Sigmoid colon (tissue), 7 donors: ENCODE measurements at regions of chr15 and their contacts with region 1.

Region 1: GRCh38 chr15:58933281-58934113 is at the start of gene SLTM:
- DNase-seq: peak; percentile 97
- H3K4me3 ChIP-seq: peak within 1 kb of the TSS; percentile 75 to 89 (median 82)
- H3K27ac ChIP-seq: peak within 1 kb of the TSS; percentile 96 to 100 (median 98)
- H3K4me1 ChIP-seq: peaks cover 4 to 33% (median 24%) of the 10 kb centered on the region in 4 donors
- H3K27me3 ChIP-seq: no peaks in the 10 kb centered on the region
- CTCF ChIP-seq: peak; percentile 22 to 47 (median 36)
- EP300 ChIP-seq: no peak
- POLR2A ChIP-seq: peak; percentile 83 to 88
- total RNA-seq, gene SLTM: 83.5 to 107 (median 95.7) TPM

Region 2: GRCh38 chr15:57706405-57707209 is 1226.9 kb before region 1 on chr15 and contains the start of gene POLR2M:
- intact Hi-C with region 1: loop called (anchors 2 kb)
- DNase-seq: peak; percentile 99
- H3K4me3 ChIP-seq: peak within 1 kb of the TSS; percentile 82 to 96 (median 86)
- H3K27ac ChIP-seq: peak within 1 kb of the TSS; percentile 94 to 97 (median 96)
- H3K4me1 ChIP-seq: peaks cover 0 to 35% (median 28%) of the 10 kb centered on the region in 4 donors
- H3K27me3 ChIP-seq: no peaks in the 10 kb centered on the region
- CTCF ChIP-seq: no peak
- EP300 ChIP-seq: peak; percentile 61 to 92 (median 71)
- POLR2A ChIP-seq: peak; percentile 61 to 68
- total RNA-seq, gene POLR2M: 80.6 to 264 (median 194) TPM

Region 3: GRCh38 chr15:58749532-58750337 is 183.8 kb before region 1 on chr15 and contains the start of gene ADAM10:
- intact Hi-C with region 1: loop called (anchors 5 kb)
- DNase-seq: peak; percentile 100
- H3K4me3 ChIP-seq: peak within 1 kb of the TSS; percentile 93 to 99 (median 96)
- H3K27ac ChIP-seq: peak within 1 kb of the TSS; percentile 98 to 99 (median 98)
- H3K4me1 ChIP-seq: peaks cover 0 to 27% (median 26%) of the 10 kb centered on the region in 4 donors
- H3K27me3 ChIP-seq: no peaks in the 10 kb centered on the region
- CTCF ChIP-seq: no peak
- EP300 ChIP-seq: peak in 2 of 4 donors; percentile 9 to 15
- POLR2A ChIP-seq: peak; percentile 85
- total RNA-seq, gene ADAM10: 44.9 to 70.9 (median 57.5) TPM

Region 4: DNA sequence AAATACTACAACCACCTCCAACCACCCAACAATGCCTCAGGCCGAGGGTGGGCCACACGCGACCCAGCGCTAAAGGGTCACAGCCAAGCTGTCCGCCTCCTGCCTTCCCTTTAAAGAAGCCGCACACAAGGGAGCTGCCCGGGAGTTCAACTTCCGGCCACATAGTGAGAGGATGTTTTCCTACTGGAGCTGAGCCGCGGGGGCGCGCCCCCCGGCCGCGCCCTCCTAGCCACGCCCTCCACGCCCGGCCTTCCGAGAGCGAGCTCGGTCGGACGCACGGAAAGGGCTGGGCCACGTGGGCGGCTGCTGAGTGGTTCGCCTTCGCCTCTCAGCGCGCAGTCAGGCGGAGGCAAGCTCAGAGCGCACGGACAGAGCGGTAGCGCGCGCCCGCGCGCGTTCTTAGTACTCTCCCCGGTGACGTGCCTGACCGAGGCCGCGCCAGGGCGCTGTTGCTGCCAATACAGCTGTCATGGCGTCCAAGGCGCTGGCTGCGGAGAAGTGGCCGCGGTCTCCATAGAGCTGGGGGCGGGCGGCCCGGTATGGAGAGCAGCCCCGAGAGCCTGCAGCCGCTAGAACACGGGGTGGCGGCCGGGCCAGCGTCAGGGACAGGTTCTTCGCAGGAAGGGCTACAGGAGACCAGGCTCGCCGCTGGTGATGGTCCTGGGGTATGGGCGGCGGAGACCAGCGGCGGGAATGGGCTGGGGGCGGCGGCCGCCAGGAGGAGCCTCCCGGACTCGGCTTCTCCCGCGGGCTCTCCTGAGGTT is 162.5 kb before region 1 on chr15 and contains the start of gene MINDY2:
- intact Hi-C with region 1: loop called (anchors 1 kb)
- DNase-seq: peak; percentile 99
- H3K4me3 ChIP-seq: peak within 1 kb of the TSS; percentile 71 to 86 (median 84)
- H3K27ac ChIP-seq: peak within 1 kb of the TSS; percentile 93 to 99 (median 96)
- H3K4me1 ChIP-seq: peaks cover 0 to 42% (median 37%) of the 10 kb centered on the region in 4 donors
- H3K27me3 ChIP-seq: no peaks in the 10 kb centered on the region
- CTCF ChIP-seq: peak in 1 of 4 experiments; percentile 33
- EP300 ChIP-seq: no peak
- POLR2A ChIP-seq: peak; percentile 59 to 88
- total RNA-seq, gene MINDY2: 18.0 to 28.5 (median 21.2) TPM

Region 5: DNA sequence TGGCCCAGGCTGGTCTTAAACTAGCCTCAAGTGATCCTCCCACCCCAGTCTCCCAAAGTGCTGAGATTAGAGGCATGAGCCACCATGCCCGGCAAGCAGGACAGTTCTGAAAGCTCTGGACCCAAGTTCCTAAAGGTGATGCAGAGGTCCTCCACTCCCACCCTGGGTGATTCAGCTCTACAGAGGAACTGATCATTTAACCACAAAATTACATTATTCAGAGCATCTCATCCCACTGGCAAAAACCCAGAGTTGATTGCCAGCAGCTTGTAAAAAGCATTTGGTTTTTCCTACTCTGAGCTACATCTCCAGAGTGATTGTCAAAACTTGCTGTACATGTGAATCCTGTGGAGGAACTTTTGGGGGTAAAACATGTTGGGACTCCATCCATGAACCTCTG is 60.2 kb before region 1 on chr15:
- intact Hi-C with region 1: loop called (anchors 10 kb)
- DNase-seq: no peak
- H3K4me3 ChIP-seq: no peak overlapping the region
- H3K27ac ChIP-seq: no peak overlapping the region
- H3K4me1 ChIP-seq: no peaks in the 10 kb centered on the region
- H3K27me3 ChIP-seq: no peaks in the 10 kb centered on the region
- CTCF ChIP-seq: no peak
- EP300 ChIP-seq: no peak
- POLR2A ChIP-seq: no peak

Region 6: DNA sequence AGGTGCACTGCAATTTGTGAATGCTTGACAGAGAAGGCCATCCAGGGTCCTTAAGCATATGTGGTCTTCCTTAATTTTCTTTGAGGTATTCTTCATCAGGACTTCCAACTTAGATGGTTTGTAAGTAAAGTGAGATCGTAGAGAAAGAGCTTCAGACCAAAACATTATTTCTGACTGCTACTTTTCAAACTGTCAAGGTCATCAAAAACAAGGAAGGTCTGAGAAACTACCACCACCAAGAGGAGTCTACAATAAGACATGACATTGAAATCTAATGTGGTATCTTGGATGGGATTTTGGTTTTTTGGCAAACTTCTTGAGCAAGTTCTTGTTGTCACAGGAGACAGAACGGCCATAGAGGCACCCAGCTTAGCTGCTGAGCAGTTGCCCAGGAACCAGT is 34.0 kb after region 1 on chr15:
- intact Hi-C with region 1: no loop called
- DNase-seq: no peak
- H3K4me3 ChIP-seq: no peak overlapping the region
- H3K27ac ChIP-seq: no peak overlapping the region
- H3K4me1 ChIP-seq: no peaks in the 10 kb centered on the region
- H3K27me3 ChIP-seq: no peaks in the 10 kb centered on the region
- CTCF ChIP-seq: no peak
- EP300 ChIP-seq: no peak
- POLR2A ChIP-seq: no peak

Region 7: DNA sequence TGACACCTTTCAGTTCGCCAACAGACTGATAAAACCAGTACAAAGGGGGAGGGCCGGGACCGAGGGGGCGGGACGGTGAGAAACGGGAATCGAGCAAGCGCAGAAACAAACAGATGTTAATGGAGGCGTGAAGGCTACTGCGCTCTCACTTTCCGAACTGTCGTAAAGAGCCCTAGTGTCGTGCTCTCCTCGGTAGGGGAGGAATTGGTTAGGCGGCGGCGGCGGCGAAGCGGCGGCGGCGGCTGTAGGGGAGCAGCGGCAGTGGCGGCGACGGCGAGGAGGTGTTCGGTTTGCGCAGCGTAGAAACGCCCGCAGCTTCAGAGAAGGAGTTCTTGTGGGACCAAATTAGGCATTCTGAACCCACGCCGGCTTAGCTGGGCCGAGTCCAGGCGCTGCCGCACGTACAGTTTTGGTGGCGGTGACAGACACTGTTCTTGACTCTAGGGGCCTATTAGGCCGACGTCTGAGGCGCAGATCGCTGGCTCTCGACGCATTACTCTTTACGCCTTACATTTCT is 54.0 kb after region 1 on chr15 and contains the start of gene RNF111:
- intact Hi-C with region 1: loop called (anchors 2 kb)
- DNase-seq: peak; percentile 95
- H3K4me3 ChIP-seq: peak within 1 kb of the TSS; percentile 86 to 95 (median 90)
- H3K27ac ChIP-seq: peak within 1 kb of the TSS; percentile 90 to 96 (median 92)
- H3K4me1 ChIP-seq: peaks cover 0 to 34% (median 26%) of the 10 kb centered on the region in 4 donors
- H3K27me3 ChIP-seq: no peaks in the 10 kb centered on the region
- CTCF ChIP-seq: no peak
- EP300 ChIP-seq: no peak
- POLR2A ChIP-seq: peak; percentile 86 to 87
- total RNA-seq, gene RNF111: 15.0 to 28.6 (median 20.8) TPM

Region 8: DNA sequence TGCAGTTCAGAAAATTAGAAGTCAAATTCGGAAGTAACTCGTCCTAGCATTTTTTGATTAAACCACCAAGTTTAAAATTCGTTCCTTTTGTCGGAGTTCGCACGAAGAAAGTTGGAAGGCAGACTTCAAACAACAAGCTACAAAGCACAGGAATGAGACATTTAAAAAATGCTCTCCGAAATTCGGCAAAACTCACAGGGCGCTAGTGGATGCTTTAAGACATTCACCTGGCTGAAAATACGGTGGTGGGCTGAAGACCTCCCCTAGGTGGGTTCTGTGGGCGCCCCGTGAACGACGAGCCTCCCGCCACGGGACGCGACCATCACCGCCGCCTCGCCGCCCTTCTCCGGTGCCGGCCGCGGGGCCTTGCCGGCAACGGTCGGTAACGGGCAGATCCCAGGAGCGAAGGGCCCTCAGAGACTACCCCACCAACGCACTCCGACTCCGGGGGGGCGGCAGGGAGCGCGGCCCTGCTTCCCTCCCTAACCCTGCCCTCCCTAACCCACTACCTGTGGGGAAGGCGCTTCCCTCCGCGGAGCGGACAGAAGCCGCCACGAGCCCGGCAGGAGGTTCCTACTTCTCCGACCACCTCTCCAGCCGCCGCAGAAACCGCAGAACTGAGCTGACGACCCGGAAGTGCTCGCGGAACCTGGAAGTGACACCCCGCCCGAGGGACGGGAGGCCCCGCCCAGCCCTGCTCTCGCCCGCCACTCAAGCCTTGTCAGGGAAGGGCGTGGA is 723.6 kb after region 1 on chr15 and contains the start of gene GTF2A2:
- intact Hi-C with region 1: loop called (anchors 5 kb)
- DNase-seq: peak; percentile 96
- H3K4me3 ChIP-seq: peak within 1 kb of the TSS; percentile 88 to 93 (median 91)
- H3K27ac ChIP-seq: peak within 1 kb of the TSS; percentile 85 to 88 (median 86)
- H3K4me1 ChIP-seq: peaks cover 0 to 31% (median 19%) of the 10 kb centered on the region in 4 donors
- H3K27me3 ChIP-seq: no peaks in the 10 kb centered on the region
- CTCF ChIP-seq: no peak
- EP300 ChIP-seq: no peak
- POLR2A ChIP-seq: peak; percentile 42 to 61
- total RNA-seq, gene GTF2A2: 33.7 to 48.2 (median 35.7) TPM